ENCODE measurements at regions of chr2 and their contacts with region 1.

Region 1: GRCh38 chr2:127790694-127791529 is 20.1 kb downstream of the WDR33 start:
- DNase-seq: no peak
- H3K4me3 ChIP-seq: no peak overlapping the region
- H3K27ac ChIP-seq: no peak overlapping the region
- H3K4me1 ChIP-seq: no peaks in the 10 kb centered on the region
- H3K27me3 ChIP-seq: no peaks in the 10 kb centered on the region
- CTCF ChIP-seq: no peak
- POLR2A ChIP-seq: no peak

Region 2: DNA sequence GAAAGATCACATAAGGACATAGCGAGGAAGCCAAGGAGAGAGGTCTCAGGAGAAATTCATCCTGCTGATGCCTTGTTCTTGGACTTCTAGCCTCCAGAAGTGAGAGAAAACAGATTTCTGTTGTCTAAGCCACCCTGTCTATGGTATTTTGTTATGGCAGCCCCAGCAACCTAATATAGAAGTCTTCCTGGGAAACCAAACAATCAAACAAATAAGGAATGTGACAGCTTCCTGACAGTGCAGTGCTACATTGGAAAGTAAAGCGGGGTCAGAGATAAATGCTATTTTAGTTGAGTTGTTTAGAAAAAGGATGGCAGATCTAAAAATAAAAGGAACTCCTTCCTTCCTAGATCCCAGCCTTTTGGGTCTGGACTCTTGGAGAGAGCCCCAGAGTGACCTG is 1578.2 kb before region 1 on chr2:
- intact Hi-C with region 1: loop called (anchors 10 kb)
- DNase-seq: no peak
- H3K4me3 ChIP-seq: no peak overlapping the region
- H3K27ac ChIP-seq: no peak overlapping the region
- H3K4me1 ChIP-seq: no peaks in the 10 kb centered on the region
- H3K27me3 ChIP-seq: no peaks in the 10 kb centered on the region
- CTCF ChIP-seq: no peak
- POLR2A ChIP-seq: no peak

Region 3: GRCh38 chr2:127841466-127842178 is 50.7 kb after region 1 on chr2:
- intact Hi-C with region 1: loop called (anchors 2 kb)
- DNase-seq: no peak
- H3K4me3 ChIP-seq: no peak overlapping the region
- H3K27ac ChIP-seq: no peak overlapping the region
- H3K4me1 ChIP-seq: no peaks in the 10 kb centered on the region
- H3K27me3 ChIP-seq: no peaks in the 10 kb centered on the region
- CTCF ChIP-seq: no peak
- POLR2A ChIP-seq: no peak